ENCODE measurements at regions of chr7 and their contacts with region 1.

Region 1: GRCh38 chr7:518630-519483 is 789 bp downstream of the PDGFA start:
- DNase-seq: peak; percentile 72
- H3K4me3 ChIP-seq: peak overlapping the region; percentile 79 to 85 (median 83)
- H3K27ac ChIP-seq: peak overlapping the region; percentile 13
- H3K4me1 ChIP-seq: peaks cover 30% of the 10 kb centered on the region
- H3K27me3 ChIP-seq: peaks cover 9 to 11% of the 10 kb centered on the region in 2 experiments
- CTCF ChIP-seq: no peak
- POLR2A ChIP-seq: peak; percentile 75

Region 2: GRCh38 chr7:460374-461116 is 58.3 kb before region 1 on chr7:
- CTCF ChIA-PET with region 1: no interaction called
- POLR2A ChIA-PET with region 1: no interaction called
- dilution Hi-C with region 1: no loop called
- intact Hi-C with region 1: loop called (anchors 2 kb)
- DNase-seq: peak; percentile 53
- H3K4me3 ChIP-seq: no peak overlapping the region
- H3K27ac ChIP-seq: peak overlapping the region; percentile 66
- H3K4me1 ChIP-seq: peaks cover 38% of the 10 kb centered on the region
- H3K27me3 ChIP-seq: no peaks in the 10 kb centered on the region
- CTCF ChIP-seq: no peak
- POLR2A ChIP-seq: no peak

Region 3: DNA sequence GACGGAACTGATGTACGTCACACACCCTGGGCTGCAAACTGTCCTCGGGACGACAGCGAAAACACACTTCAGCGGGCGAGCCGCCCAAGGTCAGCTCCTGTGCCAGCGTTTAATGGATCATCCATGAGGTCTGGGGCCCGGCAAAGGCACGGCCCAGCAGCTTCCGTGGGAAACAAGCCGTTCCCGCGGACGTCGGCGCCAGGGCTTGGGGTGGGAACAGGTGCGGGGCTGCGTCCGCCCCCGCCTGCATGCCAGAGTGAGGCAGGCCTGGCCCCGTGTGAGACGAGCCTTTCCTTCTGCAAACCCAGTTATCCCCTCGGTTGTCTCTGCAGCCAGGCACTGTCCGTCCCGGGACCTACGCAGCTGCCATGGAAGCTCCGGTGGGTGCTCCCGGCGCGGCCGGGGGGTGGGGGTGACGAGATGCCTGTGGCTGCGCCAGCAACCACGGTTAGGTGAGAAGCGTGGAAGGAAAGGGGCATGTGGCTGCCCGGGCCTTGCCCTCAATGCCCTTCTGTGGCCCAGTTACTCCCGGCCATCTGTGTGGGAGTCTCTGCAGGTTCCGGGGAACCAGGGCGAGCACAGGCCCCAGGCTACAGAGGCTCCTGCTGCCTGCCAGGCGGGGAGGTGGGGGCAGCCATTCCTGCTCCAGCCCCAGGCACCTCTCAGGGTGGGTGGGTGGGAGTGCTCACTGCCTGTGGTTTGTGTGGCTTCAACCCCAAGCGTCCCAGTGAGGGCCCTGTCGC is 42.9 kb after region 1 on chr7:
- CTCF ChIA-PET with region 1: no interaction called
- POLR2A ChIA-PET with region 1: no interaction called
- dilution Hi-C with region 1: no loop called
- intact Hi-C with region 1: no loop called
- DNase-seq: no peak
- H3K4me3 ChIP-seq: no peak overlapping the region
- H3K27ac ChIP-seq: no peak overlapping the region
- H3K4me1 ChIP-seq: no peaks in the 10 kb centered on the region
- H3K27me3 ChIP-seq: no peaks in the 10 kb centered on the region
- CTCF ChIP-seq: no peak
- POLR2A ChIP-seq: no peak

Region 4: DNA sequence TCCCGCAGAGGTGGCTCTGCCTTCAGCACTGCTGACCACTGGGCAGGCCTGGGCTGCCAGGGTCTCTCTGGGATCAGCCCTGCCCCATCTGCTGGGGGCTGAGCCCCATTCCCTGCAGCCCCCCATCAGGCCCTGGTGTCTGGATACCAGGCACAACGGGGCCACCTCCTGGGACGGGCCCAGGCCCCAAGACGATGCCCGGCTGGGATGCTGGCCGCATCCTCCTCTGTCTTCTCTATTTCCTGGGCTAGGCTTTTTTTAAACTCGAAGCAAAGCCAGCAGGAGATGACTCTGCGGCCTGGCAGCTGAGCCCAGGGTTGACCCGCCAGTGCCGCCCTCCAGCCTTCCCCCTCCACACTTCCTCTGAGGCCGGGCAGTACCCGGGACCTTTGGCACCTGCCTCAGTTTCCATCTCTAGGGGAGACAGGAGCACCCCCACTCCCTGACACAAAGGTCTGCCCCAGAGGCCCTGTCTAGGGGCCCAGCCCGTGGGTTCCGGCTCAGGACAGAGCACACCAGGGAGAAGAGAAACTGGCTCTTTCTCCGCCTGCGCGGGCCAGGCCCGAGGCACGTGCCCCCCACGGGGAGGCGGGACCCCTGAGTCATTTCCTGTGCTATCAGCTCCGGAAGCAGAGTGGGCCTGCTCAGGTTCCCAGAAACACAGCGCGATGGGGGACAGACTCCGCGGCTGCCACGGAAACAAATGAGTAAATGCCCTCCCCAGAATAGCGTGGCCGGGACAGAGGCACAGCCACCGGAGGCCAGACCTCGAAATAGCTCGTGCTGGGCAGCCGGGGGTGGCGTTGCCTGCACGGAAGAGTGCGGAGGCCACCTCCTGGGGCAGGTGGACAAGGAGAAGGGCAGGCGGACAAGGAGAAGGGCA is 85.4 kb after region 1 on chr7:
- CTCF ChIA-PET with region 1: interaction called, 6 read pairs
- POLR2A ChIA-PET with region 1: no interaction called
- dilution Hi-C with region 1: no loop called
- intact Hi-C with region 1: loop called (anchors 1 kb)
- DNase-seq: peak; percentile 93
- H3K4me3 ChIP-seq: no peak overlapping the region
- H3K27ac ChIP-seq: peak overlapping the region; percentile 97
- H3K4me1 ChIP-seq: peaks cover 60% of the 10 kb centered on the region
- H3K27me3 ChIP-seq: no peaks in the 10 kb centered on the region
- CTCF ChIP-seq: no peak
- POLR2A ChIP-seq: no peak

Region 5: DNA sequence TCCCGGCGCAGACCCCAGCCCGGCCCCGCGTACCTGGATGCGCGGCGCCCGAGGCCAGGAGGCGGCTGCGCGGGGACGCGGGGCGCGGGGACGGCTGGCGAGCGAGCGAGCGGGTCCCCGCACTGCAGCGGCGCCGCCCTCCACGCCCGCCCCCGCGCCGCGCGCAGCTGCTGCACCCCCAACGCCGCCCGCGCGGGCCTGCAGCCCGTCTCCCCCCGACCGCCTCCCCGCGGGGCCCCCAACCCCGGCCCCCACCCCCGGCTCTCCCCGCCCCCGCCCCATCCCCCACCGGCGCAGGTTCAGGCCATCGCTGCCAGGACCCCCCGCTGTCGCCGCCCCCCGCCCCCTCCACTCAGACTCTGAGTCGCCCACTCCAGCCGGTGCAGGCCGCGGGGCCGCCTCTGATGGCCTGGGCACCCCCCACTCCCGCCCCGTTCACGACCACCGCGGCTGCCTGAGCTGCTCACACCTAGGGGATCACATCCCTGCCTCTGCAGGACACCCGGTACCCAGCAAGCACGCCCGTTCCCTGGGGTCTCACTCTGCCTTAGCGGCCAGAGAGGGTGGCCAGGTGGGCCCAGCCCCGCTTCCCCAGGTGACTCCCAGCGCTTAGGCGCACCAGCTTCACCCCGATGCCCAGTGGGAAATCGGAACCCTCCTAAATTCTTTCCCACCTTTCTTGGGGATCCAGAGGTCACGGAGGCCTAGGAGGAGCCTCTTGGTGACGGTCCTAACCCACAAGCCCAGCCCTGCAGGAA is 193.7 kb after region 1 on chr7:
- CTCF ChIA-PET with region 1: no interaction called
- POLR2A ChIA-PET with region 1: no interaction called
- dilution Hi-C with region 1: no loop called
- intact Hi-C with region 1: loop called (anchors 5 kb)
- DNase-seq: no peak
- H3K4me3 ChIP-seq: peak overlapping the region; percentile 12 to 62 (median 55)
- H3K27ac ChIP-seq: no peak overlapping the region
- H3K4me1 ChIP-seq: peaks cover 6% of the 10 kb centered on the region
- H3K27me3 ChIP-seq: no peaks in the 10 kb centered on the region
- CTCF ChIP-seq: no peak
- POLR2A ChIP-seq: no peak

Region 6: DNA sequence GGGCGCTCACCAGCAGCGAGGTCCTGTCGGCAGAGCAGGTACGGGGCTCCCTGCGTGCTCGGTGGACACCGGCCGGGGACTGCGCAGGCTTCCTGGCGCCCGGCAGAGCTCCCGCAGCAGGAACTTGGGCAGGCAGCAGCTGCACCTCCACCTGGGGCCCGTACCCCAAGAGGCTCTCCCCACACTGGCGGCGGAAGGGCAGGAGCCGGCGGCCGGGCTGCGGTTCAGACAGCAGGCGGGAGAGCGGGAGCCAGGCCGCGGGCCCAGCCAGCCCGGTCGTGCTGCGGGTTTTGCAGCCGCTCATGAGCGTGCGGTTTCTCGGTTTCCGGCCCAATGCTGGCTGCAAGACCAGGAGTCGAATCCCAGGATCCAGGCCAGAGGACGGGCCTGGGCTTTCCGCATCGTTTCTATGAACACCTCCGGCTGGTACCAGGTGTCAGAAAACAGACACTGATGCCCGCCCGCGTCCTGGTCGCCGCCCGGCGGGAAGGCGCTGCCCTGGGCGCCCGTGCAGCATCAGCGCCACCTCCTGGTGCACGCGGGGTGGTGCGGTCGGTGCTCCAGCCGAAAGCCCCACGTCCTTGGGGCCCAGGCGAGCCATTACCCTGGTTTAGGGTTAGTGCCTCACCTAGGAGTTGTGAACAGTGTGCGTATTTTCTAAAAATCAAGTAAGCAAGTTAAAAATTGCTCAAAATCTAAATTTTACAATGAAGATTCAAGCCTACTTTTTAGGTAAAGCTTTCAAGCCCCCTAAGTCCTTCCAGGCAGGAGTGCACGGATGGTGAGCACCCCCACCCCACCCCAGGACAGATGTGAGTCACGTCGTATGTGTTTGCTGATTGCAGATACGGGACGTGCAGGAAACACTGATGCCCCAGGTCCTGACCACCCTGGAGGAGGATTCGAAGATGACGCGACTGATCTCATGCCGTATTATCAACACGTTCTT is 255.6 kb after region 1 on chr7:
- CTCF ChIA-PET with region 1: interaction called, 7 read pairs
- POLR2A ChIA-PET with region 1: no interaction called
- dilution Hi-C with region 1: no loop called
- intact Hi-C with region 1: loop called (anchors 5 kb)
- DNase-seq: peak; percentile 34
- H3K4me3 ChIP-seq: no peak overlapping the region
- H3K27ac ChIP-seq: no peak overlapping the region
- H3K4me1 ChIP-seq: peaks cover 39% of the 10 kb centered on the region
- H3K27me3 ChIP-seq: no peaks in the 10 kb centered on the region
- CTCF ChIP-seq: peak; percentile 91 to 93
- POLR2A ChIP-seq: no peak